BJ (cell line): ENCODE measurements at regions of chr3 and their contacts with region 1.

Region 1: GRCh38 chr3:169149349-169149890 is 514.1 kb downstream of the MECOM start:
- DNase-seq: no peak
- H3K4me3 ChIP-seq: peak overlapping the region; percentile 28
- H3K27me3 ChIP-seq: 0 out of 2 replicates have a peak, but pooled peaks cover 1% of the 10 kb centered on the region
- CTCF ChIP-seq: peak; percentile 88

Region 2: GRCh38 chr3:168671082-168671481 is 478.3 kb before region 1 on chr3:
- CTCF ChIA-PET with region 1: no interaction called
- POLR2A ChIA-PET with region 1: no interaction called
- DNase-seq: no peak
- H3K4me3 ChIP-seq: no peak overlapping the region
- H3K27me3 ChIP-seq: no peaks in the 10 kb centered on the region
- CTCF ChIP-seq: no peak

Region 3: GRCh38 chr3:169133178-169134161 is 15.9 kb before region 1 on chr3:
- CTCF ChIA-PET with region 1: interaction called, 14 read pairs
- POLR2A ChIA-PET with region 1: no interaction called
- DNase-seq: no peak
- H3K4me3 ChIP-seq: no peak overlapping the region
- H3K27me3 ChIP-seq: no peaks in the 10 kb centered on the region
- CTCF ChIP-seq: peak; percentile 45; the same call in 1 of the 2 replicates

Region 4: DNA sequence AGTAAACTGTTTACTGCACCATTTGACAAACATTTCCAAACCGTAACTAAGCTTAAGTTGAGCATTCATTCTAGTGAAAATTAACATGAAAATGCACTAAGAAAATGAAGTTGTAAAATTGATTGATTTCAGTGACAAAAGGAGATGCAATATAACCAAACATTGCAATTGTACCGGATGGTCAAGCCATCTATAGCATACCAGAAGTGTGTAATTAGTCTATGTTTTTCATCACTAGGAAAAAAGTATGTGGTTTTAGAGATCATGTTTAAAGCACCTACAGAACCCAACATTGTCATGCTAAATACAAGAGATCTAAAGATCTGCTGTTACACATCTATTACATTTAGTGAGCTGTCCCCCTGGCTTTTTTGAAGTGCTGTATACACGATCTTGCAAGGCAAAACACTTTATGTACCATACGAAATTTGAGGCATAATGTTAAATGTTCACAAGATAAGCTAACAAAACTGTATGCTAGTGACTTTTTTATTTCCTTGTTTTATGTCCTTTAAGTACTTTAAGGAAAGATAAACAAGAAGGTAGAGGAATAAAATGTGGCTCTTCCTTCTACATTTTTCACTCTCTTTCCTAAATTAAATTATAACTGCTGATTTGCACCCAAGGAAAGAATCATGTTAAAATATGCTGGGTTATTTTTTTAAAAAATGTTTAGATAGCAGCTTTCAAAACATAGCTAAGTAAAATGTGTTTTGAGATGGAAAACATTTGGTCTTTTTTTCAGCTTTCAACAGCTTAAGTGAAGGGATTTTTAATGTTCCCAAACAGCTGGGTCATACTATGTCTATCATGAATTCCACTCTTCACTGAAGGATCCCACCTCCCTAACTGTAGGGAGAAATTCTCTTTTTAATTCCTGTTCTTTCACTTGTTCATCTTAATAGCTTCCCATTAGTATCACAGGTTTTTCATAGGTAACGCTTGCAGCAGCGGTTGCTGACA is 16.1 kb after region 1 on chr3:
- CTCF ChIA-PET with region 1: interaction called, 13 read pairs
- POLR2A ChIA-PET with region 1: no interaction called
- DNase-seq: no peak
- H3K4me3 ChIP-seq: no peak overlapping the region
- H3K27me3 ChIP-seq: no peaks in the 10 kb centered on the region
- CTCF ChIP-seq: no peak